Mammary epithelial cell (primary cell): ENCODE measurements at regions of chr9 and their contacts with region 1.

Region 1: GRCh38 chr9:135864447-135865049 is 42.8 kb downstream of the CAMSAP1 start:
- DNase-seq: no peak
- H3K4me3 ChIP-seq: no peak overlapping the region
- H3K27ac ChIP-seq: no peak overlapping the region
- H3K4me1 ChIP-seq: no peaks in the 10 kb centered on the region
- H3K27me3 ChIP-seq: no peaks in the 10 kb centered on the region
- CTCF ChIP-seq: peak; percentile 92 to 95

Region 2: DNA sequence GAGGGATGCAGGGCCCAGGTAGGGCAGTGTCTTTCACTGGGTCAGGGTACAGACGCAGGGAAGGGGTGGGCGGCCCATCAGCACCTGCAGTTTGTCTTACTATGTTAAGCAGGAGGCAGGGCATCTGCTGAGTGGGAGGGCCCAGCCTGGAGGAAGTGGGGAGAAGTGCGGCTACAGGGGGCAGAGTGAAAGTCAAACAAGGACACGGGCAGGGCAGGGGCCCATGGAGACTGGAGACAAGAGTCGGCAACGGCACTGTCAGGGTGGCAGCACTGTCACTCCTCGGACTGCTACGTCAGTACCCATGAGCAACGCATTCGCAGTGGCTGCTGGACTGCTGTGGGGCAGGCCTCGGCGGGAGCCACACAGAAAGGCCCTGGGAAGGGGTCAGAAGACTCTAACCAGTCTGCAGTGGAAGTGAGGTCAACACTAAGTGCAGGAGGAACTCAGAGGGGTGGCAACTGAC is 23.1 kb after region 1 on chr9:
- CTCF ChIA-PET with region 1: no interaction called
- dilution Hi-C with region 1: no loop called
- in situ Hi-C with region 1: no loop called
- intact Hi-C with region 1: loop called (anchors 2 kb)
- DNase-seq: no peak
- H3K4me3 ChIP-seq: no peak overlapping the region
- H3K27ac ChIP-seq: no peak overlapping the region
- H3K4me1 ChIP-seq: peaks cover 74% of the 10 kb centered on the region
- H3K27me3 ChIP-seq: no peaks in the 10 kb centered on the region
- CTCF ChIP-seq: no peak

Region 3: GRCh38 chr9:135907431-135908092 is 43.0 kb after region 1 on chr9 and contains the start of gene CAMSAP1:
- CTCF ChIA-PET with region 1: no interaction called
- dilution Hi-C with region 1: no loop called
- in situ Hi-C with region 1: no loop called
- intact Hi-C with region 1: loop called (anchors 1 kb)
- DNase-seq: peak; percentile 90
- H3K4me3 ChIP-seq: peak within 1 kb of the TSS; percentile 66 to 78 (median 69)
- H3K27ac ChIP-seq: peak within 1 kb of the TSS; percentile 94
- H3K4me1 ChIP-seq: peaks cover 52% of the 10 kb centered on the region
- H3K27me3 ChIP-seq: no peaks in the 10 kb centered on the region
- CTCF ChIP-seq: no peak
- total RNA-seq, gene CAMSAP1: 23.5 to 25.5 TPM

Region 4: DNA sequence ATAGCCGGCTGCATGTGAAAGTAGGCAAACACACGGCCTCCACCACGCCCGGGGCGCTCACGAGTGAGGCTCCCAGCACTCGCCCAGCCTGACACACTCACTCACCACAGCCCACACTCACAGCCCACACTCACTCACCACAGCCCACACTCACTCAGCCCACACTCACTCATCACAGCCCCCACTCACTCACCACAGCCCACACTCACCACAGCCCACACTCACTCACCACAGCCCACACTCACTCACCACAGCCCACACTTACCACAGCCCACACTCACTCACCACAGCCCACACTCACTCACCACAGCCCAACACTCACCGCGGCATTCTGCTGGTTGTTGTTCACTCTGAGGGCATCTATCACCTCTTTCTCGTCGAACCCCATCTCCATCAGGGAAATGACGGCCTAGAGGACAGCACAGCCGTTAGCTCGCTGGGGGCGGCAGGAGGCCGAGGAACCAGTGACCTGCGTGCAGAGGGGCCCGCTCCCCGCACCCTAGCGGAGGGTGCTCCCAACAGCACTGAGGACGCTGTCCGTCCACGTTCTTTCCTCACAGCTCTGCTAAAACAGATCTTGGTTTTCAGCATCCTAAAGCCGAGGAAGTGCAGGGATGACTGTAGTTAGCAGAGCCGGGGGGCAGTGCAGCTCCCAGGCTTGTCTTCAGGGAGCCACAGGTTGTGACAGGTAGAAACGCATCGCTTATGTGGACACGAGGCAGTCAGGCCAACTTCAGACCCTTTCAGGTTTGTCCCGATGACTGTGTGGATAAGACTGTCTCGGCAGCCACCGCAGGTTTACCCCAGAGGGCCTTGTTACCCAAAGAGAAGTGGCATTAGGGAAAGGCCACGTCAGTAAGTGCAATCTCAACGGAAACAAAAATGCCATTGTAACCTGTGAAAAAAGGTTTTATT is 75.1 kb after region 1 on chr9:
- CTCF ChIA-PET with region 1: no interaction called
- dilution Hi-C with region 1: no loop called
- in situ Hi-C with region 1: no loop called
- intact Hi-C with region 1: no loop called
- DNase-seq: no peak
- H3K4me3 ChIP-seq: no peak overlapping the region
- H3K27ac ChIP-seq: no peak overlapping the region
- H3K4me1 ChIP-seq: no peaks in the 10 kb centered on the region
- H3K27me3 ChIP-seq: no peaks in the 10 kb centered on the region
- CTCF ChIP-seq: no peak

Region 5: GRCh38 chr9:135949501-135950134 is 85.1 kb after region 1 on chr9:
- CTCF ChIA-PET with region 1: no interaction called
- dilution Hi-C with region 1: no loop called
- in situ Hi-C with region 1: no loop called
- intact Hi-C with region 1: no loop called
- DNase-seq: no peak
- H3K4me3 ChIP-seq: no peak overlapping the region
- H3K27ac ChIP-seq: no peak overlapping the region
- H3K4me1 ChIP-seq: peaks cover 30% of the 10 kb centered on the region
- H3K27me3 ChIP-seq: no peaks in the 10 kb centered on the region
- CTCF ChIP-seq: no peak

Region 6: DNA sequence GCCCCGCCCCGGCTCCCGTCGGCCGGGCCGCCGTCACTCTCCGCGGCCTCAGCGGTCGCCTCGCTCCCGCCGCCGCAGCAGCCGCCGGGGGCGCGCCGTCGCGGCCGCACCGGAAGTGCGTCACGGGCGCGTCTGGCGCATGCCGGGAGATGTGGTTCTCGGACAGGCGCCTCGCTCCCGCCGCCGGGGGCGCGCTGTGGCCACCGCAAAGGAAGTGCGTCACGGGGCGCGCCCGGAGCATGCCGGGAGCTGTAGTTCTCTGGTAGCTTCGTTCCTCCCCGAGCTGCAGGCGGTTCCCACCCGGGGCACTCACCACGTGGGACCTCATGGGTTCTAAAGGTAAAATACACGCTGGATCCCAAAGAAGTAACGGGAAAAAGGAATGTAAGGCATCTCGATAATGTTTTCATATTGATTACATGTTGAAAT is 96.7 kb after region 1 on chr9 and contains the start of gene UBAC1:
- CTCF ChIA-PET with region 1: no interaction called
- dilution Hi-C with region 1: no loop called
- in situ Hi-C with region 1: no loop called
- intact Hi-C with region 1: loop called (anchors 1 kb)
- DNase-seq: peak; percentile 91
- H3K4me3 ChIP-seq: peak within 1 kb of the TSS; percentile 60 to 92 (median 68)
- H3K27ac ChIP-seq: peak within 1 kb of the TSS; percentile 37
- H3K4me1 ChIP-seq: peaks cover 13% of the 10 kb centered on the region
- H3K27me3 ChIP-seq: no peaks in the 10 kb centered on the region
- CTCF ChIP-seq: peak in 1 of 2 donors; percentile 48
- total RNA-seq, gene UBAC1: 39.2 to 43.4 TPM

Region 7: DNA sequence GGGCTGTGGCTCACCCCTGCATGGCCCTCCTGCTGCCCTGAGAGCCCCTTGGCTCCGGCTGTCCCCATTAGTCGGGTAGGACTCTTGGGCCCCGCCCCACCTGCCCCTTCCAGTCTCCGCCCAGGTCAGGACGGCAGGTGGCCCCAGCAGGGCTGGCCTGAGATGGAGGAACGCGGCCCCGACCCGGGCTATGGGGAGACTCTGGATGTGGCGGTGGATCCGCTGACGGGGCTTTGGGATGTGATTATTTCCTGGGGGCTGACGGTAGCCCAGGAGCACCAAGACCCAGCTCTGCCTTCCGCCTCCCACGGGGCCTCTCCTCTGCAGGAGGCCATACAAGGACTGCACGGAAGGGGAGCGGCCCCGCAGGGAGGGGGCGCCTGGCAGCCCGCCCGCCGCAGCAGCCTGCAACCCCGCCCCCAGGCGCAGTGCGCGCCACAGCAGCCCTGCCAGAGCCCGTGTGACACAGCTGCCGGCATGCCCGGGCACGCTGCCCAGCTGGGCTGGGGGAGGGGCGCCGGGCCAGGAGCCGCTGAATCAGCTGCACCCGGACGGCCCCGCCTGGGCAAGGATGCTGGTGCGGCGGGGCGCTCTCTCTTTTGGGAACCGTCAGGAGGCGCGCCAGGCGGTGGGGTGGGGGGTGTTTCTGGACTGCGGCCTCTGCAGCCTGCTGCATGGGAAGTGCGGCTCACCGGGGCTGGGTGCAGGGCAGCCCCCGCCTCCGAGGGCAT is 245.0 kb after region 1 on chr9:
- CTCF ChIA-PET with region 1: no interaction called
- dilution Hi-C with region 1: loop called (anchors 5 kb)
- in situ Hi-C with region 1: no loop called
- intact Hi-C with region 1: no loop called
- DNase-seq: peak; percentile 90
- H3K4me3 ChIP-seq: peak overlapping the region in 2 of 3 experiments; percentile 6 to 12
- H3K27ac ChIP-seq: no peak overlapping the region
- H3K4me1 ChIP-seq: peaks cover 46% of the 10 kb centered on the region
- H3K27me3 ChIP-seq: no peaks in the 10 kb centered on the region
- CTCF ChIP-seq: peak in 1 of 2 donors; percentile 20

Region 8: GRCh38 chr9:136138566-136138965 is 274.0 kb after region 1 on chr9:
- CTCF ChIA-PET with region 1: no interaction called
- dilution Hi-C with region 1: loop called (anchors 5 kb)
- in situ Hi-C with region 1: no loop called
- intact Hi-C with region 1: no loop called
- DNase-seq: no peak
- H3K4me3 ChIP-seq: no peak overlapping the region
- H3K27ac ChIP-seq: no peak overlapping the region
- H3K4me1 ChIP-seq: peaks cover 14% of the 10 kb centered on the region
- H3K27me3 ChIP-seq: peaks cover 6% of the 10 kb centered on the region
- CTCF ChIP-seq: peak; percentile 26 to 48